ENCODE measurements at regions of chr1 and their contacts with region 1.

Region 1: GRCh38 chr1:167219646-167220536 is 795 bp upstream of the POU2F1 start:
- DNase-seq: peak; percentile 69 to 93 (median 87)
- ATAC-seq: peak; percentile 71
- H3K4me3 ChIP-seq: peak overlapping the region; percentile 77 to 98
- H3K27ac ChIP-seq: peak overlapping the region; percentile 82 to 83
- H3K4me1 ChIP-seq: peaks cover 9 to 22% of the 10 kb centered on the region in 2 donors
- H3K27me3 ChIP-seq: no peaks in the 10 kb centered on the region
- CTCF ChIP-seq: no peak

Region 2: GRCh38 chr1:166479052-166479631 is 740.7 kb before region 1 on chr1:
- intact Hi-C with region 1: no loop called
- DNase-seq: peak in 2 of 4 donors; percentile 11 to 32
- ATAC-seq: peak; percentile 57
- H3K4me3 ChIP-seq: no peak overlapping the region
- H3K27ac ChIP-seq: no peak overlapping the region
- H3K4me1 ChIP-seq: no peaks in the 10 kb centered on the region
- H3K27me3 ChIP-seq: no peaks in the 10 kb centered on the region
- CTCF ChIP-seq: peak; percentile 59 to 79

Region 3: GRCh38 chr1:167066333-167067122 is 153.4 kb before region 1 on chr1:
- intact Hi-C with region 1: loop called in 1 of 2 experiments (anchors 10 kb)
- DNase-seq: peak; percentile 69 to 95 (median 77)
- ATAC-seq: peak; percentile 99
- H3K4me3 ChIP-seq: peak overlapping the region in 1 of 2 donors; percentile 11
- H3K27ac ChIP-seq: no peak overlapping the region
- H3K4me1 ChIP-seq: peaks cover 3 to 7% of the 10 kb centered on the region in 2 donors
- H3K27me3 ChIP-seq: no peaks in the 10 kb centered on the region
- CTCF ChIP-seq: peak; percentile 94 to 99

Region 4: DNA sequence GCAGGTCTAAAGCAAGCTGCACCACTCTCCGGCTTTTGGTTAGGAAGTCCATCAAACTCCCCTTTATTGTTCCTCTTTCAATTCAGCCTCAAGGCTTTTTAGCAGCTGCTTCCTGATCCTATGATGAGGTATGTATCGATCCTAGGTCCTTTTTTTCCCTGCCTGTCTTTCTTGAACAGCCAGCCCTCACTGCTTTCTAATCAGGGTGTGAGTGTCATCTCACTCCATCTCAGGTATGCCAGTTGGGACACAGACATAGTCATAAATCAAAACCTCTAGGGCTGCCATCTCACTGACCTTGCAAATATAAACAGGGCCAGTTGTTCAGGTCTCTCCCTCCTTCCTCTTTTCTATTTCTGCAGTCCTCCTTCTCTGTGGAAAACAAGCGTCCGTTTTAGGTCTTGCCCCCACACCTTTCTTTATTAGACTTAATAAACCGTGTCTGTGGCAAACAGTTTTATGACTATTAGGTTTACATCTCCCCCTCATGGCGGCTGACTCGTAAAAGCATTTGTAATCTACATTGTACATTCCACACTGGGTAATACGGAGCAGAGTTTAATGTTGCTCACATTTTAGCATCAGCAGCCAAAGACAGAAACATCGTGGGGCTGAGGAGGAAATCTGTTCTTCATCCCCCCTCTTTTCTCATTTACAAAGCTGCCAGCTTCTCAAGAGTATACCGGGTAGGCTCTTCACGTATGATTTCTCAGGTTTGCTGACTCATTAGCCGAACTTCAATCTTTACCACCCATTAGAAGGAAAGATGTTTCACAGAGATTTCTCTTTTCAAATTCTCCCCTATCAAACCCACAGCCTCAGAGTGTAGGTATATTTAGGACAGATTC is 114.4 kb before region 1 on chr1:
- intact Hi-C with region 1: no loop called
- DNase-seq: no peak
- ATAC-seq: no peak
- H3K4me3 ChIP-seq: no peak overlapping the region
- H3K27ac ChIP-seq: no peak overlapping the region
- H3K4me1 ChIP-seq: no peaks in the 10 kb centered on the region
- H3K27me3 ChIP-seq: no peaks in the 10 kb centered on the region
- CTCF ChIP-seq: no peak

Region 5: DNA sequence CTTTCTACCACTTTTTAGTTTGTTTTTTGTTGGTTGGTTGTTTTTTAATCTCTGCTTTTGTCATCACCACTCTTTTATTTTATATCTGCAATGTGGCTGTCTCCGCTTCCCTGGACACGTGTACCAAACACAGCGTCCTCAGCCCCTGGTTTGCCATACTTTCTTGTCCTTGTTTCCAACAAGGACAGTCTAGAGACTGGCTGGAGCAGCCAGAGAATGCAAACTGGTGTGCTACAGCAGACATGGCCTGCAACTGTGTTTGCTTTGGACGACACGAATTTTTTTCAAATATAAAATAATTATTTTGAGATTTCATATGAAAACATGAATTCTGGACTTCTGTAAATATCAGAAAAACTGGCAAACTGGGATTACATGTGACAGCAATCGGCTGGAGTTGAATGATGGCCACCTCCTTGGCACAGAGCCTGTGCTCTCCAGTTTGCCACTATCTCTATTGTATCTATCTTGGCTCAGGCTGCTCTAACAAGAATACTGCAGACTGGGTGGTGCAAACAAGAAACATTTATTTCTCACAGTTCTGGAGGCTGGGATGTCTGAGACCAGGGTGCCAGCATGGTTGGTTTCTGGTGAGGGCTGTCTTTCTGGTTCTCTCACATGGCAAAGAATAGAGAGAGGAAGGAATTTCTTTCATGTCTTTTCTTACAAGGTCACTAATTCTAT is 33.8 kb before region 1 on chr1:
- intact Hi-C with region 1: no loop called
- DNase-seq: no peak
- ATAC-seq: no peak
- H3K4me3 ChIP-seq: no peak overlapping the region
- H3K27ac ChIP-seq: no peak overlapping the region
- H3K4me1 ChIP-seq: no peaks in the 10 kb centered on the region
- H3K27me3 ChIP-seq: no peaks in the 10 kb centered on the region
- CTCF ChIP-seq: no peak

Measured in left lung (tissue), 14 donors.